ENCODE measurements at regions of chr1 and their contacts with region 1.

Region 1: GRCh38 chr1:53393325-53393792 is 65.5 kb upstream of the LRP8 start:
- DNase-seq: peak; percentile 74
- ATAC-seq: peak; percentile 80
- H3K4me3 Mint-ChIP-seq: no peak overlapping the region
- H3K27ac Mint-ChIP-seq: no peak overlapping the region
- H3K4me1 Mint-ChIP-seq: peaks cover 8% of the 10 kb centered on the region
- H3K27me3 Mint-ChIP-seq: peaks cover 3% of the 10 kb centered on the region

Region 2: DNA sequence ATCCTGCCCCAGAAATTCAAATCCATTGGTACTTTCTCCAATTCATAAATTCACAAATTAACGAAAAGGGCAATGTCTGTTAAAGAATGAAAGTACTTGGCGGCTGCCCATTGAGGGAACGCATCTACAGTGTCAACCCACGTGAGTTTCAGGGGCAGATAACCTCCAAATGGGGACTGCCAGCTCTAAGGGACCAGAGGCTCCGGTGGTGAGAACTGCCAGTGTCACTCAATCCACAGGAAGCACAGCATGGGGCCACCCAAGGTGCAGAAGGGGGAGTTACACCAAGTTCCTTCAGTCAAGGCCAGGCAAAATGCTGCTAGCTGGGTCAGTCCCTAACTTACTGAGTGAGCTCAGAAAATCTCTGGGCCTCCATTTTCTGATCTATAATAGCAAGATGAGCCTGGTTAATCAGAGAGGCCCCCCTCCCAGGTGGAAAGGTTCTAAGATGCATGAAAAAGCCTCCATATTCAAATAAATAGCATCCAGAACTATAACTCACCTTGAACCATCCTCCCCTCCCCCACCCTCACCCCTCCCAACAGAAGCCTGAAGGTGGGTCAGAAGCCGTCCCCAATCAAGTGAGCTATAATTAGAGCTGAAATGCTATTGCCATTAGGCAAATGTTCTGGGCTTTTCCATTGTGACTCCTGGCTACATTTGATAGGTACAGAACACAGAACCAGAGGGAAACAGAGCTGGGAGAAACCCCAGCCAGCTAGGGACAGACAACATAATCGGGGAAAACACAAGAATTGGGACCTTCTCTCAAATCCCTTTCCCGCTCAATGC is 107.2 kb before region 1 on chr1:
- CTCF ChIA-PET with region 1: interaction called, 167 read pairs
- POLR2A ChIA-PET with region 1: interaction called, 3 read pairs
- DNase-seq: no peak
- ATAC-seq: peak; percentile 24
- H3K4me3 Mint-ChIP-seq: no peak overlapping the region
- H3K27ac Mint-ChIP-seq: no peak overlapping the region
- H3K4me1 Mint-ChIP-seq: peaks cover 9% of the 10 kb centered on the region
- H3K27me3 Mint-ChIP-seq: no peaks in the 10 kb centered on the region

Region 3: DNA sequence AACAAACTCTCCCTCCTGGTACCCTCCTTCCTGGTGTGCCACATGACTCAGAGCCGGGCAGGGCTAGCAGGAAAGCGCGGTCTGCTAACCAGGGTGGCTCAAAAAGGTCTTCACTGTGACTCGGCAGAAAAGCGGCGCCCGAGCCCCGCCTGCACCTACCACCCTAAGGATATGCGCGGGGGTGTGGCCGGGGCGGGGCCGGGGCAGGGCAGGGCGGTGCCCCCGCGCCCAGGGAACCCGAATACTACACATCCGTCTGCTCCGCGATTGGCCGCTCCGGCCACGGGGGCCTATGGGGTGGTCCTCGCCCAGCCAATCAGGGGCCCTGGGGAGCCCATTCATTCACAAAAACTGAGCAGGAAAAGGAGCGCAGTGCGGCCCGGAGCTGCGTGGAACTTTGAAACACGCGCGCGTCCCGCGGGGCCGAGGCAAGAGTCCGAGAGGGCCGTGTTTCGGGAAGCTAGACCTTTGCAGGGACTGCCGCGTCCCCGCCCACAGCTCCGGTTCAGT is 67.2 kb before region 1 on chr1:
- CTCF ChIA-PET with region 1: interaction called, 23 read pairs
- POLR2A ChIA-PET with region 1: no interaction called
- DNase-seq: peak; percentile 98
- ATAC-seq: peak; percentile 93
- H3K4me3 Mint-ChIP-seq: peak overlapping the region; percentile 97
- H3K27ac Mint-ChIP-seq: peak overlapping the region; percentile 98
- H3K4me1 Mint-ChIP-seq: peaks cover 54% of the 10 kb centered on the region
- H3K27me3 Mint-ChIP-seq: no peaks in the 10 kb centered on the region

Region 4: GRCh38 chr1:53367503-53368304 is 25.7 kb before region 1 on chr1:
- CTCF ChIA-PET with region 1: interaction called, 11 read pairs
- POLR2A ChIA-PET with region 1: no interaction called
- DNase-seq: peak; percentile 78
- ATAC-seq: peak; percentile 97
- H3K4me3 Mint-ChIP-seq: peak overlapping the region; percentile 78
- H3K27ac Mint-ChIP-seq: peak overlapping the region; percentile 89
- H3K4me1 Mint-ChIP-seq: peaks cover 28% of the 10 kb centered on the region
- H3K27me3 Mint-ChIP-seq: no peaks in the 10 kb centered on the region

Measured in activated CD8-positive, alpha-beta T cell treated with anti-CD3 and anti-CD28 coated beads, Interleukin-2, amount 10 ng/mL, durations not matched to agents 7 days and 5 days (primary cell).